A549 (cell line): ENCODE measurements at regions of chr17 and their contacts with region 1.

Region 1: GRCh38 chr17:59786536-59787319 is 79.3 kb downstream of the VMP1 start:
- DNase-seq: peak; percentile 81 to 100
- ATAC-seq: peak; percentile 88 to 92
- H3K4me3 ChIP-seq: no peak overlapping the region
- H3K27ac ChIP-seq: peak overlapping the region; percentile 94 to 98
- H3K4me1 ChIP-seq: peaks cover 92% of the 10 kb centered on the region
- CTCF ChIP-seq: no peak
- EP300 ChIP-seq: peak; percentile 99 to 100
- POLR2A ChIP-seq: no peak
- RAD21 ChIP-seq: peak; percentile 43 to 68

Region 2: GRCh38 chr17:59695945-59696692 is 90.6 kb before region 1 on chr17:
- CTCF ChIA-PET with region 1: no interaction called
- POLR2A ChIA-PET with region 1: no interaction called
- DNase-seq: peak in 1 of 2 experiments; percentile 36
- ATAC-seq: peak; percentile 8 to 35; a peak in 4 of 6 replicates
- H3K4me3 ChIP-seq: no peak overlapping the region
- H3K27ac ChIP-seq: peak overlapping the region; percentile 59 to 60
- H3K4me1 ChIP-seq: peaks cover 33% of the 10 kb centered on the region; the same call in 2 of the 3 replicates
- CTCF ChIP-seq: no peak
- EP300 ChIP-seq: peak in 1 of 2 experiments; percentile 42; a peak in 1 of 5 replicates
- POLR2A ChIP-seq: no peak
- RAD21 ChIP-seq: peak in 1 of 2 experiments; percentile 3; a peak in 1 of 5 replicates

Region 3: DNA sequence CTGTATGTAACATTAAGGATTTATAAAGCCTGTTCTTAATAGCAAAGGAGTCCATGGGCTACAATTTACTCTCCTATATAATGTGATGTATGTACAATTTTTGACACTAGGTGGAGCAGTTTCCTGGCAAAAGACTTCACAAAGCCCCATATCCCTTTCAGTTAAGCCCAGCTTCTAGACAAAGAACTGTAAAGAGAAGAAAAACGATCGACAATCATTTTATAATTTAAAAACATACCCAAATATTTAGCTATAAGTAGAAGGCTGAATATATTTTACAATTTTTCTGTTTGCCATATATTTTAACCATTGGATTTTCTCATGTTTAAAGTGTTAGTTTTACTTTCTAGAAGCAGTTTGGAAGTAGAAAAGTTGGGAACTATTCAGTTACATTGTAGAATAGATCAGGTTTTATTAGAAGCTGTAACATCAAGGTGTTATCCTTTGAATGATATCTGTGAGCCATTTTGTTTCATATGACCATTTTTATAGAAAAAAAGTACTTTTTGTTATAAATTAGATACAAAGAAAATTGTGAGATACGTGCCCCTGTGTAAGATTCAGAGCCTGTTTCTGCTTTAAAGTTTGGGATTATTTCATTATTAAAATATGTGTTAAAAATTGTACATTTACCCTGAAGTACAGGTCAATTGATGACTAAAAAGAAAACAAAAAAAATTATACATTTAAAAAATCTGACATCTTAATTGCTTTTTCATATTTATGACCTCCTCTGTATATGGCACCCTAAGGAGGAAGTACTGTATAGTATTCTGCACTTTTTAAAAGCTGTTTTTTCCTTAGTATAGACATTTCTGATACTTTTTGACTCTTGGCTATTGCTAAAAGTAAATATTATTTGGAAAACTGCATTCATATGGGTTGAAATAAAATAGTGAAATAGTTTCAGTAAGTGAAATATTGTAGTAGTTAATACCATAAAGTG is 32.9 kb before region 1 on chr17:
- CTCF ChIA-PET with region 1: interaction called, 42 read pairs
- POLR2A ChIA-PET with region 1: interaction called, 85 read pairs
- DNase-seq: peak; percentile 81 to 94
- ATAC-seq: peak; percentile 49 to 65
- H3K4me3 ChIP-seq: no peak overlapping the region
- H3K27ac ChIP-seq: peak overlapping the region; percentile 95
- H3K4me1 ChIP-seq: peaks cover 92% of the 10 kb centered on the region
- CTCF ChIP-seq: peak; percentile 98
- EP300 ChIP-seq: no peak
- POLR2A ChIP-seq: no peak
- RAD21 ChIP-seq: peak; percentile 97 to 98

Region 4: GRCh38 chr17:59762513-59763374 is 24.0 kb before region 1 on chr17:
- CTCF ChIA-PET with region 1: interaction called, 10 read pairs
- POLR2A ChIA-PET with region 1: interaction called, 9 read pairs
- DNase-seq: peak in 1 of 2 experiments; percentile 59
- ATAC-seq: 0 out of 6 replicates have a peak, but pooled peaks of 1 of the 2 experiments have one; percentile 12
- H3K4me3 ChIP-seq: no peak overlapping the region
- H3K27ac ChIP-seq: peak overlapping the region; percentile 94 to 95
- H3K4me1 ChIP-seq: peaks cover 56% of the 10 kb centered on the region
- CTCF ChIP-seq: no peak
- EP300 ChIP-seq: no peak
- POLR2A ChIP-seq: no peak
- RAD21 ChIP-seq: no peak

Region 5: GRCh38 chr17:59804901-59805465 is 18.3 kb after region 1 on chr17:
- CTCF ChIA-PET with region 1: interaction called, 4 read pairs
- POLR2A ChIA-PET with region 1: interaction called, 11 read pairs
- DNase-seq: peak in 1 of 2 experiments; percentile 89
- ATAC-seq: peak in 1 of 2 experiments; percentile 29; a peak in 3 of 6 replicates
- H3K4me3 ChIP-seq: peak overlapping the region; percentile 4; the same call in 1 of the 3 replicates
- H3K27ac ChIP-seq: peak overlapping the region; percentile 90 to 92
- H3K4me1 ChIP-seq: peaks cover 85% of the 10 kb centered on the region
- CTCF ChIP-seq: no peak
- EP300 ChIP-seq: no peak
- POLR2A ChIP-seq: no peak
- RAD21 ChIP-seq: no peak

Region 6: DNA sequence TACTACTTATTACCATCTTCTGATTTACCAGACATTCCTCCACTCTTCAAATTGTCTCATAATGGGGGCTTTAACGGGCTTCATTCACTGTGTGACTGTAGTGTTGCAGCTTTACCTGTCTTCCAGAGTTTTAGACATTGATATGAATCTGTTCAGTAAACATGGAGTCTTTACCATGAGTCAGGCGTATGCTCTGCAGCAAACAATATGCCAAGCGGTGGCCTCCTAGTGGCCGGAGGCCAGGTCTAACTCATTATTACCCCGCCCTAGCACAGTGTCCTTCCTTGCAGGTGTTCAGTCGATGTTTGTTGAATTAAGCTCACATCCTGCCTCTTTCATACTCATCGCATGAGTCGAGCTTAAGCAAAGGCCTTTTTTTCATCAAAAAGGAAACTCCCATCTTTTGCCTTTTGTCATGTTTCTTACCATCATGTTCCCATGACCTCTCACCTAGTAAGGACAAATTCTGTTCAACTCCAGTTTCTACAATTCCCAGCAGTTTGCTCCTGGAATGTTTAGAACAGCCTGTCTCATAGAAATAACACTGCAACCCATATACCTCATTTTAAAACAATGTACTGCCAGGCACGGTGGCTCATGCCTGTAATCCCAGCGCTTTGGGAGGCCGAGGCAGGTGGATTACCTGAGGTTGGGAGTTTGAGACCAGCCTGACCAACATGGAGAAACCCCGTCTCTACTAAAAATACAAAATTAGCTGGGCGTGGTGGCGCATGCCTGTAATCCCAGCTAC is 66.6 kb after region 1 on chr17:
- CTCF ChIA-PET with region 1: interaction called, 12 read pairs
- POLR2A ChIA-PET with region 1: interaction called, 610 read pairs
- DNase-seq: peak; percentile 86 to 100
- ATAC-seq: peak; percentile 82 to 88
- H3K4me3 ChIP-seq: no peak overlapping the region
- H3K27ac ChIP-seq: peak overlapping the region; percentile 91 to 96
- H3K4me1 ChIP-seq: peaks cover 96% of the 10 kb centered on the region
- CTCF ChIP-seq: peak; percentile 67
- EP300 ChIP-seq: peak; percentile 95 to 97
- POLR2A ChIP-seq: no peak
- RAD21 ChIP-seq: peak; percentile 64 to 71